CD4-positive, alpha-beta T cell (primary cell): ENCODE measurements at regions of chr17 and their contacts with region 1.

Region 1: DNA sequence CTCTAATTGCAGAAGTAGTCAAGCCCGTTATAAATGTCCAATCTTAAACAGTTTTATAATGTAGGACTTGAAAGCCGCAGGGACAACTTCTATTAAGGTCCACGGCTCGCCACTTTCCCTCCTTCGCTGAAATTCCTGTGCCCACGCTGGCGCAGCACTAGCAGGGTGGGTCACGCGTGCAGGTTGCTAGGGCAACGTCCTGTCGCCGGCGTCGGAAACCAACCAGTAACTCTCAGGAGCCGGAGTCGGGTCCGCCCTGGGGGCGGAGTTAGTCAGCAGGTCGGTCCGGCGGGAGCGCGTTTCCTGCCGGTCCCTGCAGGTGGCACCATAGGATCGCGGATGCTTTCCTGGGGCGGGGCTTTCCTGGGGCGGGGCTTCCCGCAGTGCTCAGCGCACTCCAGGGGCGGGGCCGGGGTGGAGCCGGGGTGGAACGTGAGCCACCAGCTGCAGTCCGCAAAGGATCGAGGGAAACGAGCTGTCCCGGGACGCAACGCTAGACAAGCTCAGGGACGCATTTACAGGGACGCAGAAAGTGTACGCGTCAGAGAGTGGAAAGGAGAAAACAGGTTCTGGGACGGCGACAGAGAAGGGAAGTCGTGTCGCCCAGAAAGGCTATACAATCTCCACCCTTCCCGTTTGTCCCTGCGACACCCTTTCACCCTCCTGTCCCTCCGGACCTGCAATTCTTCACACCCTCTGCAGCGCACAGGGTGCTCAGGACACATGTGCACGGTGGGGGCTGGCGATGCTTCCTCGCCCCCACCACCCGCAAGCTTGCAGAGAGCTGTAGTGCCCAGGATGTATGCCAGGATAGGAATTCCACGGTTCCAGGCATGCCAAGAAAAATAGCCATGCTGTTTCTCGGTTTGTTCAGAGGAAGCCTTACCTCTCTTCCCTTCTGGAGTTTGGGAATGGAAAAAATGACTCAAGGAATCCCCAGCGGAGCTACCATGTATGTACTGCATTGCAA is 12.4 kb downstream of the COPZ2 start:
- DNase-seq: peak; percentile 95 to 99 (median 98)
- ATAC-seq: peak; percentile 90
- H3K4me3 ChIP-seq: peak overlapping the region; percentile 66
- H3K4me3 Mint-ChIP-seq: peak overlapping the region; percentile 85
- H3K27ac ChIP-seq: no peak overlapping the region
- H3K27ac Mint-ChIP-seq: peak overlapping the region; percentile 78
- H3K4me1 ChIP-seq: peaks cover 34% of the 10 kb centered on the region
- H3K4me1 Mint-ChIP-seq: peaks cover 28% of the 10 kb centered on the region
- H3K27me3 ChIP-seq: peaks cover 13 to 14% of the 10 kb centered on the region in 2 experiments
- H3K27me3 Mint-ChIP-seq: peaks cover 71% of the 10 kb centered on the region
- CTCF ChIP-seq: peak; percentile 76

Region 2: GRCh38 chr17:47949136-47949759 is 76.0 kb before region 1 on chr17:
- CTCF ChIA-PET with region 1: interaction called, 3 read pairs
- POLR2A ChIA-PET with region 1: no interaction called
- intact Hi-C with region 1: loop called in 1 of 2 experiments (anchors 1 kb)
- DNase-seq: peak; percentile 57 to 89 (median 74)
- ATAC-seq: peak; percentile 66
- H3K4me3 ChIP-seq: peak overlapping the region; percentile 51
- H3K4me3 Mint-ChIP-seq: peak overlapping the region; percentile 36
- H3K27ac ChIP-seq: peak overlapping the region in 1 of 2 donors; percentile 58
- H3K27ac Mint-ChIP-seq: peak overlapping the region; percentile 32
- H3K4me1 ChIP-seq: peaks cover 51% of the 10 kb centered on the region
- H3K4me1 Mint-ChIP-seq: peaks cover 44% of the 10 kb centered on the region
- H3K27me3 ChIP-seq: no peaks in the 10 kb centered on the region
- H3K27me3 Mint-ChIP-seq: no peaks in the 10 kb centered on the region
- CTCF ChIP-seq: peak; percentile 95

Region 3: DNA sequence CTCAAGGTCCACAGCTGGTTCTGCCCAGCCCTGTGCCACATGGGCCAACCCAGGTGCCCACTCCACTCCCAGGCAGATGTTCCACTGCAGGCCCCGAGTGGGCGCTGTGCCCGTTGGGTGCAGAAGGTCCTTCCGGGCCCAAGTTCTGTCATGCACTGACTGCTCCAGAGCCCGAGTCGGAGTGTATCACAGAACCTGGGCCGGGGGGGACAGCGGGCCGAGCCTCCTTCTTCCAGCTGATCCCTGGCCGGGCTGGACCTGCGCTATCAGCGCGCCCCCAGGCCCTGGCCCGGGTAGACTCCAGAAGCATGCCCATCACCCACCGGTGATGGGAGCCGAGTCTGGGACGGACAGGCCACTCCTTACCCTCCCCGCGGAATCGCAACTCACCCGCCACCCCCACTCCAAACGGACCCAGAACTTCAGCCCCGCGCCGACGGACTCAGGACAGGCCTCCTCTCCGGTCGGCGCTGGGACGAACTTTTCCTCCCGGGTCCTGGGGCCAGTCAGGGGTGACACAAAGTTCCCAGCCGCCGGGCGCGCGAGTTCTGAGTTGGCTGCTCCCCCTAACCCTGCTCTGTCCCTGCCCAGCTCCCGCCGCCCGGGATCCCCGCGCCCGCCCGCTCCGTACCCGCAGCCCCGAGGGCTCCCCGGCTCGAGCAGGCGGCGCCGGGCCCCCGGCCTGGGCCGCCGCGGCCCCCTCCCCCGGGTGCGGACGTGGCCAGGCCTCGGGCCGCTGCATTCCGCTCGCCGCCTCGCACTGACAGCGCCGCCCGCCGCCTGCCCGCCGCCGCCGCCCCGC is 12.0 kb after region 1 on chr17 and contains the start of gene COPZ2:
- CTCF ChIA-PET with region 1: interaction called, 13 read pairs
- POLR2A ChIA-PET with region 1: interaction called, 3 read pairs
- intact Hi-C with region 1: no loop called
- DNase-seq: peak; percentile 46 to 84 (median 61)
- ATAC-seq: peak; percentile 100
- H3K4me3 ChIP-seq: peak within 1 kb of the TSS; percentile 76
- H3K4me3 Mint-ChIP-seq: peak within 1 kb of the TSS; percentile 97
- H3K27ac ChIP-seq: no peak within 1 kb of the TSS
- H3K27ac Mint-ChIP-seq: no peak within 1 kb of the TSS
- H3K4me1 ChIP-seq: peaks cover 15% of the 10 kb centered on the region
- H3K4me1 Mint-ChIP-seq: peaks cover 9% of the 10 kb centered on the region
- H3K27me3 ChIP-seq: peaks cover 17 to 26% of the 10 kb centered on the region in 2 experiments
- H3K27me3 Mint-ChIP-seq: peaks cover 56% of the 10 kb centered on the region
- CTCF ChIP-seq: peak; percentile 72
- total RNA-seq, gene COPZ2: 0.47 to 0.88 TPM

Region 4: DNA sequence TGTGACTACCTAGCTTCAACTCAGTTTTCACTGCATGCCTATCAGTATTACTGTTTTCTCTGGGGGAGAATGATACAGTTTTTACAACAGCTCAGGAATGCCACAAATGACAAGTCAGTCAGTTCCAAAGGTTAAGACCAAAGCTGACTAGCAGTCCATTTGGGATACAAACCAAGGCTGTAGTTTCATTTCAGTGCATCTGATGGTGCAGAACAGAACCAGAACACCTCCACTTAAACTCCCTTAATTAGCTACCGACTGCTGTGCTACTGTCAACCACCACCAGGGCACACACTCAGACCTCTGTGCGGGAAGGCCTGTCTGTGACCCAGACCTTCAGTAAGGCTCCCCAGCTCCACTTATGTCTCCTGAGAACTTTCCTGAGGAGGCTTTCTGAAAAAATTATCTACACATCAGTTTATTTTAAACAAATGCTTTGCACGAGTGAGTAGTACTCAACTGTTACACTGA is 43.3 kb after region 1 on chr17:
- CTCF ChIA-PET with region 1: interaction called, 37 read pairs
- POLR2A ChIA-PET with region 1: interaction called, 3 read pairs
- intact Hi-C with region 1: no loop called
- DNase-seq: peak in 1 of 14 experiments; percentile 27
- ATAC-seq: peak; percentile 51
- H3K4me3 ChIP-seq: no peak overlapping the region
- H3K4me3 Mint-ChIP-seq: no peak overlapping the region
- H3K27ac ChIP-seq: no peak overlapping the region
- H3K27ac Mint-ChIP-seq: no peak overlapping the region
- H3K4me1 ChIP-seq: no peaks in the 10 kb centered on the region
- H3K4me1 Mint-ChIP-seq: no peaks in the 10 kb centered on the region
- H3K27me3 ChIP-seq: no peaks in the 10 kb centered on the region
- H3K27me3 Mint-ChIP-seq: no peaks in the 10 kb centered on the region
- CTCF ChIP-seq: no peak

Region 5: DNA sequence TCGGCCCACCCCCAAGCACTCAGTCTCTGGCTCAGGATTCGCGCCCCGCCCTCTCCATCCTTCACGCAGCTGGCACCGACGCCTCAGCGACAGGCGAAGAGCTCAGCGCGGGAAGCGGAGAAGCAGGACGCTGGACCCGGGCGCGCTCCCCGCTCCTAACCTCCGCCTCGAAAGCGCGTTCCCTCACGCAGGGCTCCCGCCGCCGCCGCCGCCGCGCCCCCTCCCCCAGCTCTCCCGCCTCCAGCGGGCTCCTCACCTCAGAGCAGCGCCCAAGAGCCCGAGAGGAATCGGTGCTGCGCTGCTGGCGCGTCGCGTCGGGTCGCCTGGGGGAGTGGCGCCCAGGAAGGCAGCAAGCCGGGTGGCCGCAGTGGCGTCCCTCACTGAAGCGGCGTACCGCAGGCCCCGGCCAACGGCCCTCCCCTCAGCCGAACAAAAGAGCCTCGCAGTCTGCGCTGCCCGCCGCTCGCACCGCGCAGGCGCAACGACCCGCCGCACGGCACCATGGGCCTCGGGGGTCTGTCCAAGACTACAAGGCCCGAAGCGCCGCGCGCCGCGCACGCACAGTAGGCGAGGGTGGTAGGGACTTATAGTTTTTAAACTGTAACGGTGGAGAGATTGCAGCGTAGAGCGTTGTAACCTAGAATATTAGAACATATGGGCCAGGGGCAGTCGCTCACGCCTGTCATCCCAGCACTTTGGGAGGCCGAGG is 75.9 kb after region 1 on chr17 and contains the start of gene CBX1:
- CTCF ChIA-PET with region 1: interaction called, 4 read pairs
- POLR2A ChIA-PET with region 1: interaction called, 3 read pairs
- intact Hi-C with region 1: loop called in 1 of 2 experiments (anchors 1 kb)
- DNase-seq: peak; percentile 87 to 97 (median 92)
- ATAC-seq: peak; percentile 94
- H3K4me3 ChIP-seq: peak within 1 kb of the TSS; percentile 89
- H3K4me3 Mint-ChIP-seq: peak within 1 kb of the TSS; percentile 92
- H3K27ac ChIP-seq: peak within 1 kb of the TSS in 1 of 2 donors; percentile 50
- H3K27ac Mint-ChIP-seq: peak within 1 kb of the TSS; percentile 74
- H3K4me1 ChIP-seq: peaks cover 21% of the 10 kb centered on the region
- H3K4me1 Mint-ChIP-seq: peaks cover 48% of the 10 kb centered on the region
- H3K27me3 ChIP-seq: no peaks in the 10 kb centered on the region
- H3K27me3 Mint-ChIP-seq: no peaks in the 10 kb centered on the region
- CTCF ChIP-seq: no peak
- total RNA-seq, gene CBX1: 5.5 to 6.6 TPM

Region 6: DNA sequence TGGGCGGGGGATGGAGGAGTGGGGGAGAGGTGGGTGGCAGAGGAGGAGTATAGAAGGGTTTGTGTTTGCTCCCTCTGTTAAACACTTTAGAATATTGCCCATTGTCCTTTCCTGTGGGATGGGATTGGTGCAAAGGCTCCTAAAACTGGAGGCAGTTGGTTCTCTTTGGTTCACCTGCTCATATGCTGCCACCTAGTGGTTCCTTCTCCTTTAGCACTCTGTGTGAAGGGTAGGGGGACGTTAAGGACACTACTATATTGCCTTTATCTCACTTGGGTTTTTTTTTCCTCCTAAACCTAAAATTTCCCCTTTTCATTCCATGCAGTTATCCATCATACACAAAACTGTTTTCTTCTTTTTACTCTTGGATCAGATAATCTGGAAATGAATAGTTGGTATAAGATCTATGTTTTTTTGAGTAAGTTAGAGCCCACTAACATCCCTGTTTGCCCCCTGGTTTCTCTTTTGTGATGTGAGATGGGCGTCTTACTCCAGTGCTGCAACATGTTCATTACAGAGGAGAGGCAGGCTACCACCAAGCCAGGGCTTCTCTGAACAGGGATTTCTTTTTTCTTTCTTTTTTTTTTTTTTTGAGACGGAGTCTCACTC is 106.1 kb after region 1 on chr17:
- CTCF ChIA-PET with region 1: interaction called, 15 read pairs
- POLR2A ChIA-PET with region 1: interaction called, 3 read pairs
- intact Hi-C with region 1: loop called (anchors 1 kb)
- DNase-seq: peak in 13 of 14 experiments; percentile 6 to 81 (median 33)
- ATAC-seq: peak; percentile 89
- H3K4me3 ChIP-seq: no peak overlapping the region
- H3K4me3 Mint-ChIP-seq: no peak overlapping the region
- H3K27ac ChIP-seq: no peak overlapping the region
- H3K27ac Mint-ChIP-seq: peak overlapping the region; percentile 19
- H3K4me1 ChIP-seq: no peaks in the 10 kb centered on the region
- H3K4me1 Mint-ChIP-seq: no peaks in the 10 kb centered on the region
- H3K27me3 ChIP-seq: no peaks in the 10 kb centered on the region
- H3K27me3 Mint-ChIP-seq: no peaks in the 10 kb centered on the region
- CTCF ChIP-seq: peak; percentile 93

Region 7: GRCh38 chr17:48618256-48618897 is 593.2 kb after region 1 on chr17:
- CTCF ChIA-PET with region 1: interaction called, 10 read pairs
- POLR2A ChIA-PET with region 1: interaction called, 3 read pairs
- intact Hi-C with region 1: loop called (anchors 2 kb)
- DNase-seq: peak; percentile 68 to 91 (median 80)
- ATAC-seq: peak; percentile 75
- H3K4me3 ChIP-seq: no peak overlapping the region
- H3K4me3 Mint-ChIP-seq: peak overlapping the region; percentile 34
- H3K27ac ChIP-seq: no peak overlapping the region
- H3K27ac Mint-ChIP-seq: no peak overlapping the region
- H3K4me1 ChIP-seq: peaks cover 40% of the 10 kb centered on the region
- H3K4me1 Mint-ChIP-seq: peaks cover 44% of the 10 kb centered on the region
- H3K27me3 ChIP-seq: peaks cover 94 to 99% of the 10 kb centered on the region in 2 experiments
- H3K27me3 Mint-ChIP-seq: peaks cover 100% of the 10 kb centered on the region
- CTCF ChIP-seq: peak; percentile 99